CD4-positive, alpha-beta T cell (primary cell): ENCODE measurements at regions of chr12 and their contacts with region 1.

Region 1: GRCh38 chr12:3885277-3886094 is 12.3 kb upstream of the PARP11 start:
- DNase-seq: peak in 10 of 14 experiments; percentile 26 to 83 (median 43)
- ATAC-seq: peak; percentile 46
- H3K4me3 ChIP-seq: no peak overlapping the region
- H3K4me3 Mint-ChIP-seq: no peak overlapping the region
- H3K27ac ChIP-seq: no peak overlapping the region
- H3K27ac Mint-ChIP-seq: peak overlapping the region; percentile 38
- H3K4me1 ChIP-seq: peaks cover 10% of the 10 kb centered on the region
- H3K4me1 Mint-ChIP-seq: peaks cover 17% of the 10 kb centered on the region
- H3K27me3 ChIP-seq: no peaks in the 10 kb centered on the region
- H3K27me3 Mint-ChIP-seq: no peaks in the 10 kb centered on the region
- CTCF ChIP-seq: peak; percentile 97

Region 2: DNA sequence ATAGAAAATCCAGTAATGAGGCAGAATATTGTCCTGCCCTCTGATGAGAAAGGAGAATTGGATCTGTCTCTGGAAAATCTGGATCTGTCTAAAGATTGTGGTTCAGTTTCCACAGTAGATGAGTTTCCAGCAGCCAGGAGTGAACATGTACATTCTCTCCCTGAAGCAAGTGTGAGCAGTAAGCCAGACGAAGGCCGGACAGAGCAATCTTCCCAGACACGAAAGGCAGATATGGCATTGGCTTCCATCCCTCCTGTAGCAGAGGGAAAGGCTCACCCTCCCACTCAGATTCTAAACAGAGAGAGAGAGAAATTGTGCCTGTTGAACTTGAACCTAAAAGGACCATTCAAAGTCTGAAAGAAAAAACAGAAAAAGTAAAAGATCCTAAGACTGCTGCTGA is 43.7 kb before region 1 on chr12:
- CTCF ChIA-PET with region 1: no interaction called
- POLR2A ChIA-PET with region 1: no interaction called
- intact Hi-C with region 1: no loop called
- DNase-seq: no peak
- ATAC-seq: no peak
- H3K4me3 ChIP-seq: no peak overlapping the region
- H3K4me3 Mint-ChIP-seq: no peak overlapping the region
- H3K27ac ChIP-seq: no peak overlapping the region
- H3K27ac Mint-ChIP-seq: peak overlapping the region; percentile 16
- H3K4me1 ChIP-seq: no peaks in the 10 kb centered on the region
- H3K4me1 Mint-ChIP-seq: peaks cover 62% of the 10 kb centered on the region
- H3K27me3 ChIP-seq: no peaks in the 10 kb centered on the region
- H3K27me3 Mint-ChIP-seq: no peaks in the 10 kb centered on the region
- CTCF ChIP-seq: no peak

Region 3: GRCh38 chr12:3896801-3897331 is 11.4 kb after region 1 on chr12:
- CTCF ChIA-PET with region 1: interaction called, 8 read pairs
- POLR2A ChIA-PET with region 1: interaction called, 23 read pairs
- intact Hi-C with region 1: loop called in 1 of 2 experiments (anchors 1 kb)
- DNase-seq: peak in 3 of 14 experiments; percentile 36 to 43 (median 42)
- ATAC-seq: peak; percentile 33
- H3K4me3 ChIP-seq: peak overlapping the region; percentile 33
- H3K4me3 Mint-ChIP-seq: peak overlapping the region; percentile 76
- H3K27ac ChIP-seq: peak overlapping the region; percentile 69 to 87
- H3K27ac Mint-ChIP-seq: no peak overlapping the region
- H3K4me1 ChIP-seq: peaks cover 78% of the 10 kb centered on the region
- H3K4me1 Mint-ChIP-seq: peaks cover 48% of the 10 kb centered on the region
- H3K27me3 ChIP-seq: no peaks in the 10 kb centered on the region
- H3K27me3 Mint-ChIP-seq: no peaks in the 10 kb centered on the region
- CTCF ChIP-seq: no peak

Region 4: GRCh38 chr12:3988519-3989448 is 103.3 kb after region 1 on chr12:
- CTCF ChIA-PET with region 1: interaction called, 14 read pairs
- POLR2A ChIA-PET with region 1: interaction called, 15 read pairs
- intact Hi-C with region 1: no loop called
- DNase-seq: peak in 8 of 14 experiments; percentile 9 to 63 (median 45)
- ATAC-seq: peak; percentile 94
- H3K4me3 ChIP-seq: peak overlapping the region; percentile 10
- H3K4me3 Mint-ChIP-seq: peak overlapping the region; percentile 52
- H3K27ac ChIP-seq: peak overlapping the region; percentile 43 to 55
- H3K27ac Mint-ChIP-seq: peak overlapping the region; percentile 84
- H3K4me1 ChIP-seq: peaks cover 22% of the 10 kb centered on the region
- H3K4me1 Mint-ChIP-seq: peaks cover 36% of the 10 kb centered on the region
- H3K27me3 ChIP-seq: no peaks in the 10 kb centered on the region
- H3K27me3 Mint-ChIP-seq: no peaks in the 10 kb centered on the region
- CTCF ChIP-seq: no peak

Region 5: GRCh38 chr12:4037747-4038312 is 152.3 kb after region 1 on chr12:
- CTCF ChIA-PET with region 1: interaction called, 19 read pairs
- POLR2A ChIA-PET with region 1: interaction called, 12 read pairs
- intact Hi-C with region 1: loop called (anchors 1 to 2 kb)
- DNase-seq: peak in 5 of 14 experiments; percentile 18 to 61 (median 44)
- ATAC-seq: no peak
- H3K4me3 ChIP-seq: no peak overlapping the region
- H3K4me3 Mint-ChIP-seq: no peak overlapping the region
- H3K27ac ChIP-seq: no peak overlapping the region
- H3K27ac Mint-ChIP-seq: no peak overlapping the region
- H3K4me1 ChIP-seq: no peaks in the 10 kb centered on the region
- H3K4me1 Mint-ChIP-seq: peaks cover 4% of the 10 kb centered on the region
- H3K27me3 ChIP-seq: no peaks in the 10 kb centered on the region
- H3K27me3 Mint-ChIP-seq: no peaks in the 10 kb centered on the region
- CTCF ChIP-seq: peak; percentile 73

Region 6: DNA sequence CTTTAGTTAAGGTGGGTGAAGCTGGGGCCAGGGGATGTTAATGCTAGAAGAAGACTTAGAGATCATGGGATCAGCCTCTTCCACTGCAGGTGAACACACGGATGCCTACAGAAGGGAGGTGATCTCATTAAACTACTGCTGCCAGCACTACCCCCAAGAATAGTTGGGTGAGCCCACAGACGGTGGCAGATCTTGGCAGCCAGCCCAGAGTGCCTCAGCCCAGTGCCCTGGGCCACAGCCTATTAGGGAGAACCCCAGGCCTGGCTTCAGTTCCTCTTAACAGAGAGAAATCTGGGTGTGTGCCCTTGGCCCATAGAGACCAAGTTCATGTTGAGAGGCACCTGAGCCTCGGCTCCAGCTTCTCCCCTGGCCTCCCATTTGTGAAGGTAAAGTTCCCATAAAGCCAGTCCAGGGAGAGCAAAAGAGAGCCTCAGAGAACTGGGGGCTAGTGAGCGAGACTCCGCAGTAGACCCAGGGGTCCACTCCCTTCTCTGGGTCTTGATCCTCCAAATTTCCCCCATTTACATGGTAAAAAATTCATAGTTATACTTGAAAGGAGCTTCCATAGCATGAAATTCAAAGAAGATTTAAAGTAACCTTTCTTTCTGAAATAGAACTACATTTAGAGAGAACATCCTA is 263.1 kb after region 1 on chr12:
- CTCF ChIA-PET with region 1: interaction called, 4 read pairs
- POLR2A ChIA-PET with region 1: no interaction called
- intact Hi-C with region 1: loop called in 1 of 2 experiments (anchors 10 kb)
- DNase-seq: peak in 11 of 14 experiments; percentile 16 to 82 (median 43)
- ATAC-seq: peak; percentile 56
- H3K4me3 ChIP-seq: no peak overlapping the region
- H3K4me3 Mint-ChIP-seq: no peak overlapping the region
- H3K27ac ChIP-seq: no peak overlapping the region
- H3K27ac Mint-ChIP-seq: no peak overlapping the region
- H3K4me1 ChIP-seq: peaks cover 51% of the 10 kb centered on the region
- H3K4me1 Mint-ChIP-seq: peaks cover 47% of the 10 kb centered on the region
- H3K27me3 ChIP-seq: no peaks in the 10 kb centered on the region
- H3K27me3 Mint-ChIP-seq: no peaks in the 10 kb centered on the region
- CTCF ChIP-seq: no peak

Region 7: GRCh38 chr12:4700621-4701026 is 815.1 kb after region 1 on chr12:
- CTCF ChIA-PET with region 1: no interaction called
- POLR2A ChIA-PET with region 1: no interaction called
- intact Hi-C with region 1: no loop called
- DNase-seq: no peak
- ATAC-seq: no peak
- H3K4me3 ChIP-seq: no peak overlapping the region
- H3K4me3 Mint-ChIP-seq: no peak overlapping the region
- H3K27ac ChIP-seq: no peak overlapping the region
- H3K27ac Mint-ChIP-seq: no peak overlapping the region
- H3K4me1 ChIP-seq: no peaks in the 10 kb centered on the region
- H3K4me1 Mint-ChIP-seq: no peaks in the 10 kb centered on the region
- H3K27me3 ChIP-seq: peaks cover 0 to 4% of the 10 kb centered on the region in 2 experiments
- H3K27me3 Mint-ChIP-seq: no peaks in the 10 kb centered on the region
- CTCF ChIP-seq: no peak

Region 8: DNA sequence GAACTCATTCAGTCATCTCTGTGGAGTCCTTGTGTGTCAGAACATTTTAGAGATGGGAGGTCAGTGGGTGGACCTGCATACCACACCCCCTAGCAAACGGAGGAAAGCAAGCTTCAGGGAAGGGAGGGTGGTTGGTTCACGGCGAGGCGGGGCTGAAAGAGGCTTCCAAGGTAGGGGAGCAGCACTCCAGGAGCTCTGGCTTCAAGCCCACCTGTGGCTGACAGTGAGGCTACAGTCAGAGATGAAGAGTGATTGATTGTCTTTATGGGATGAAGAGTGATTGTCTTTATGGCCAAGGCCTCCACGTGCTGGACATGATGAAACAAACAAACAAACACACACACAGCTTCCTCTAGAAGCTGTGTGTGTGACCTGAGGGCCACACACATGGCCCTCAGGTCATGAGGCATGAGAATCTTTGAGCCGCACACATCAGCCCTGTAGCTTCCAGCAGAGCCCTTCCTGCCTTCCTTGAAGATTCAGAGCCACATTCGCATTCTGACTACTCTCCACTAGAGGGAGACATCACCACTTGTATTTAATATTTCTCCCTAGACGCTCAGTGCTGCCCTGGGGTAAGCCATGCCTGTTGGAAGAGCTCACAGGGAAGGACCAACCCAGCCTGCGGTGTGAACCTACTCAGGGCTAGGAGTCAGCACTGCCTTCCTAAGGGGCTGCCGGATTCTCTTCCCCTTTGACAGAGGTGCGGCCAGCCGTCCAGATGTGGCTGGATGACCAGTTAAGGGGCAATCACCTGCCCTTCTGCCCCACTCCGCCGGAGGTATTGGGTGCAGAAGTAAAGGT is 969.8 kb after region 1 on chr12:
- CTCF ChIA-PET with region 1: no interaction called
- POLR2A ChIA-PET with region 1: no interaction called
- intact Hi-C with region 1: no loop called
- DNase-seq: peak in 12 of 14 experiments; percentile 8 to 80 (median 33)
- ATAC-seq: peak; percentile 71
- H3K4me3 ChIP-seq: no peak overlapping the region
- H3K4me3 Mint-ChIP-seq: no peak overlapping the region
- H3K27ac ChIP-seq: no peak overlapping the region
- H3K27ac Mint-ChIP-seq: no peak overlapping the region
- H3K4me1 ChIP-seq: peaks cover 16% of the 10 kb centered on the region
- H3K4me1 Mint-ChIP-seq: peaks cover 17% of the 10 kb centered on the region
- H3K27me3 ChIP-seq: peaks cover 0 to 9% of the 10 kb centered on the region in 2 experiments
- H3K27me3 Mint-ChIP-seq: peaks cover 21% of the 10 kb centered on the region
- CTCF ChIP-seq: peak; percentile 84